ENCODE measurements at regions of chr9 and their contacts with region 1.

Region 1: GRCh38 chr9:132800038-132800648 is 77.9 kb downstream of the AK8 start:
- DNase-seq: peak; percentile 76
- H3K4me3 ChIP-seq: no peak overlapping the region
- H3K27ac ChIP-seq: no peak overlapping the region
- H3K4me1 ChIP-seq: peaks cover 6% of the 10 kb centered on the region
- H3K27me3 ChIP-seq: no peaks in the 10 kb centered on the region
- CTCF ChIP-seq: peak; percentile 82 to 94 (median 86)
- POLR2A ChIP-seq: no peak

Region 2: GRCh38 chr9:132411091-132411508 is 389.0 kb before region 1 on chr9:
- intact Hi-C with region 1: loop called (anchors 5 kb)
- DNase-seq: peak; percentile 28
- H3K4me3 ChIP-seq: no peak overlapping the region
- H3K27ac ChIP-seq: no peak overlapping the region
- H3K4me1 ChIP-seq: no peaks in the 10 kb centered on the region
- H3K27me3 ChIP-seq: peaks cover 13% of the 10 kb centered on the region
- CTCF ChIP-seq: peak; percentile 22 to 70 (median 64)
- POLR2A ChIP-seq: no peak

Region 3: DNA sequence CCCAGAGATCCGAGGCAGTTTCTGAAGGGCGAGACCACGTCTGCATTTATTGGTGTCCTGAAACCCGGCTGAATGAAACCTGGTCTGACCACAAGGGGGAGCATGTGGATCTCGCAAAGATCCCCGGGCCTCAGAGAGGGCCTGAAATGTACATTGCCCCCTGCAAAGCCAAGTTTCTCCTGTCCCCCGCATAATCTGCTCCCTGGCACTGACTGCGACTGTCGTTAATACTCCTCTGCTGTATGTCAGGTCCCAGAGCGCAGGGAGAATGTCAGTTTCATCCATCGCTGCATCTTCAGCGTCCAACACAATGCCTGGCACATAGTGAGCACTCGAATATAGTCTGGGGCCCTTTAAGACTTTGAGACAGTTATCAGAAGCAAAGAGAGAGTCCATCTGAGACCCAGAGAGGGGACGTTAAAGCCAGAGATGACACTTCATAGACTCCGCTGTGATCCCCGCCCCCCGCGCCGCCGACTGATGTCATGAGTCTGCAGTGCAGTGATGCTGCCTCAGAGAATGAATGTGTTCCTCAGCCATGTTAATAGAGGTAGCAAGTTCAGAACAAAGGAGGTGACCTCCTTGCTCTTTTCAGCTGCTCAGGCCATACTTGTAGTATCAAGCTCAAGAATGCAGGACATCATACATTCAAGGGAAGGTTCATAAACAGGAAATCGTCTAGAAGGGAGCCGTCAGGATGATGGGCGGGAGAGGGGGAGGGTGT is 292.2 kb before region 1 on chr9:
- intact Hi-C with region 1: loop called (anchors 5 kb)
- DNase-seq: peak; percentile 65
- H3K4me3 ChIP-seq: no peak overlapping the region
- H3K27ac ChIP-seq: no peak overlapping the region
- H3K4me1 ChIP-seq: no peaks in the 10 kb centered on the region
- H3K27me3 ChIP-seq: no peaks in the 10 kb centered on the region
- CTCF ChIP-seq: peak; percentile 70 to 84 (median 78)
- POLR2A ChIP-seq: no peak

Region 4: DNA sequence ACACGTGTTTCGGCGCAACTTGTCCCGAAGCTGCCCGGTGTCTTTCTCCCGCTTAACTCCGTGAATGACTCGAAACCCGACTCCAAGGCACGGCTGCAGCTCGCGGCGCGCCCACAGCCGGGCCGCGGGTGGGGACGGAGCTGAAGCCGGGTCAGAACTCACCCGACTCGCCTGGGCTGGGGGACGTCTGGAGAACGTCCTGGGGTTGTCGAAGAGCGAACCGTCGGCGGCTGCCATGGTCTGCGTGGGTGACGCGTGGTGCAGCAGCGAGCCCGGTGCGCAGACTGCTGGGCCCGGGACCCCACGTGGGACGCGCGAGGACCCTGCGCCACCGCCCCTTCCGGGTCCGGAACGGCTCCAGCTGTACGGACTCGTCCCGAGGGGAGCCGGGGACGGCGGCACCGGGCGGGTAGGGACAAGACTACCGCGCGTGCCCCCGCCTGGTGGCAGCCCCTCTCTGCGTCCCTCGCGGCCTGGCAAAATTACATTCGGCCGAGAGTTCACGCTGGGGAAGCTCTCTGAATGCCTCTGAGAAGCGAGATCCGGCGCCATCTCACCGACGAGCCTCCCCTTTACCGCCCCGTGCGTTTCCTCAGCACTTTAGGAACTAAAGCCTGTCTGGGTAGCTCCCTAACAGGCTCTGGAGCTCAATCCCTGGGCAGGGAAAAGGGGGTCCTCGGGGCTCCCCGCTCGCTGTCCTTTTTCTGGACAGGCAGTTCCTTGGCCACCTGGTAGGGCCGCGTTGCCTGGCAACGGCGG is 130.3 kb before region 1 on chr9 and contains the start of gene DDX31:
- intact Hi-C with region 1: loop called (anchors 5 kb)
- DNase-seq: peak; percentile 77
- H3K4me3 ChIP-seq: peak within 1 kb of the TSS; percentile 96 to 99
- H3K27ac ChIP-seq: peak within 1 kb of the TSS; percentile 95 to 96
- H3K4me1 ChIP-seq: peaks cover 7% of the 10 kb centered on the region
- H3K27me3 ChIP-seq: no peaks in the 10 kb centered on the region
- CTCF ChIP-seq: peak in 1 of 4 experiments; percentile 32
- POLR2A ChIP-seq: no peak
- total RNA-seq, gene DDX31: 19.0 to 22.2 TPM

Region 5: GRCh38 chr9:132973713-132974112 is 173.6 kb after region 1 on chr9:
- intact Hi-C with region 1: loop called (anchors 10 kb)
- DNase-seq: no peak
- H3K4me3 ChIP-seq: no peak overlapping the region
- H3K27ac ChIP-seq: no peak overlapping the region
- H3K4me1 ChIP-seq: no peaks in the 10 kb centered on the region
- H3K27me3 ChIP-seq: no peaks in the 10 kb centered on the region
- CTCF ChIP-seq: no peak
- POLR2A ChIP-seq: no peak